ENCODE measurements at regions of chr2 and their contacts with region 1.

Region 1: GRCh38 chr2:16756831-16757644 is 91.4 kb upstream of the CYRIA start:
- DNase-seq: peak; percentile 11 to 72 (median 58)
- ATAC-seq: peak; percentile 66
- H3K4me3 ChIP-seq: no peak overlapping the region
- H3K4me3 Mint-ChIP-seq: no peak overlapping the region
- H3K27ac ChIP-seq: no peak overlapping the region
- H3K27ac Mint-ChIP-seq: no peak overlapping the region
- H3K4me1 ChIP-seq: no peaks in the 10 kb centered on the region
- H3K4me1 Mint-ChIP-seq: no peaks in the 10 kb centered on the region
- H3K27me3 ChIP-seq: no peaks in the 10 kb centered on the region
- H3K27me3 Mint-ChIP-seq: peaks cover 3% of the 10 kb centered on the region
- CTCF ChIP-seq: peak; percentile 59

Region 2: GRCh38 chr2:15636972-15637785 is 1119.9 kb before region 1 on chr2:
- CTCF ChIA-PET with region 1: interaction called, 3 read pairs
- POLR2A ChIA-PET with region 1: no interaction called
- intact Hi-C with region 1: loop called (anchors 2 to 5 kb)
- DNase-seq: peak; percentile 20 to 73 (median 58)
- ATAC-seq: peak; percentile 78
- H3K4me3 ChIP-seq: no peak overlapping the region
- H3K4me3 Mint-ChIP-seq: no peak overlapping the region
- H3K27ac ChIP-seq: no peak overlapping the region
- H3K27ac Mint-ChIP-seq: no peak overlapping the region
- H3K4me1 ChIP-seq: no peaks in the 10 kb centered on the region
- H3K4me1 Mint-ChIP-seq: no peaks in the 10 kb centered on the region
- H3K27me3 ChIP-seq: no peaks in the 10 kb centered on the region
- H3K27me3 Mint-ChIP-seq: no peaks in the 10 kb centered on the region
- CTCF ChIP-seq: peak; percentile 94

Region 3: DNA sequence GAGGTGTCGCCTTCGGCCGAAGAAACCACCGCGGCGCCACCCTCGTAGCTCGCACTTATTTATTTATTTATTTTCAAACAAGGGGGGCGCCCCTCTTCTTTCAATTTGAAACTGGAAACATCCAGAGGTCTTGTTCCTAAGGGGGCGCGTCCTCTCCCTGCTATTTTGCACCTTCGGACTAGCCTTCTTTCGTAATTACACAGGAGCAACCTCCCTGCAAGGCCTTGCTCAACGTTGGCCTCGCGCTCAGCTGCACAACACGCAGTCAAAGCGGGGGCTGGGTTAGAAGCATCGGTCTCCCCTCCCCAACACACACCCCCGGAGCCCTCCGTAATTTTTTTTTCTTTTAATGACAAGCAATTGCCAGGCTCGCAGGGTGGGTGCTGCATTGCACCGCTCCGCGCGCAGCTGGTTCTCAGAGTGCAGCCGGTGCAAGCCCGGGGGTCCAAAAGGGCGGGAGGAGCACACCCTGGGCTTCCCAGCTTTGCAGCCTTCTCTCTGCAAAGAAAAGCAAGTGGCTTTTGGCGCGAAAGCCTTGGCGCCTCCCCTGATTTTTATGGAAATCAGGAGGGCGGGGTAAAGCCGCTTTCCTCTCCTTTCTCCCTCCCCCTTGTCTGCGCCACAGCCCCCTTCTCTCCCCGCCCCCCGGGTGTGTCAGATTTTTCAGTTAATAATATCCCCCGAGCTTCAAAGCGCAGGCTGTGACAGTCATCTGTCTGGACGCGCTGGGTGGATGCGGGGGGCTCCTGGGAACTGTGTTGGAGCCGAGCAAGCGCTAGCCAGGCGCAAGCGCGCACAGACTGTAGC is 817.0 kb before region 1 on chr2 and contains the start of gene MYCN:
- CTCF ChIA-PET with region 1: no interaction called
- POLR2A ChIA-PET with region 1: no interaction called
- intact Hi-C with region 1: loop called in 1 of 2 experiments (anchors 2 kb)
- DNase-seq: peak in 6 of 9 experiments; percentile 30 to 63 (median 34)
- ATAC-seq: no peak
- H3K4me3 ChIP-seq: peak within 1 kb of the TSS; percentile 28 to 54
- H3K4me3 Mint-ChIP-seq: peak within 1 kb of the TSS; percentile 75
- H3K27ac ChIP-seq: no peak within 1 kb of the TSS
- H3K27ac Mint-ChIP-seq: no peak within 1 kb of the TSS
- H3K4me1 ChIP-seq: peaks cover 36% of the 10 kb centered on the region
- H3K4me1 Mint-ChIP-seq: peaks cover 31% of the 10 kb centered on the region
- H3K27me3 ChIP-seq: peaks cover 9 to 14% of the 10 kb centered on the region in 2 experiments
- H3K27me3 Mint-ChIP-seq: peaks cover 50% of the 10 kb centered on the region
- CTCF ChIP-seq: peak; percentile 41
- total RNA-seq, gene MYCN: not detected

Region 4: GRCh38 chr2:16553226-16553625 is 203.8 kb before region 1 on chr2:
- CTCF ChIA-PET with region 1: interaction called, 4 read pairs
- POLR2A ChIA-PET with region 1: no interaction called
- intact Hi-C with region 1: loop called in 1 of 2 experiments (anchors 1 kb)
- DNase-seq: peak in 4 of 9 experiments; percentile 5 to 51 (median 28)
- ATAC-seq: no peak
- H3K4me3 ChIP-seq: no peak overlapping the region
- H3K4me3 Mint-ChIP-seq: no peak overlapping the region
- H3K27ac ChIP-seq: no peak overlapping the region
- H3K27ac Mint-ChIP-seq: no peak overlapping the region
- H3K4me1 ChIP-seq: no peaks in the 10 kb centered on the region
- H3K4me1 Mint-ChIP-seq: no peaks in the 10 kb centered on the region
- H3K27me3 ChIP-seq: no peaks in the 10 kb centered on the region
- H3K27me3 Mint-ChIP-seq: no peaks in the 10 kb centered on the region
- CTCF ChIP-seq: peak; percentile 50

Region 5: DNA sequence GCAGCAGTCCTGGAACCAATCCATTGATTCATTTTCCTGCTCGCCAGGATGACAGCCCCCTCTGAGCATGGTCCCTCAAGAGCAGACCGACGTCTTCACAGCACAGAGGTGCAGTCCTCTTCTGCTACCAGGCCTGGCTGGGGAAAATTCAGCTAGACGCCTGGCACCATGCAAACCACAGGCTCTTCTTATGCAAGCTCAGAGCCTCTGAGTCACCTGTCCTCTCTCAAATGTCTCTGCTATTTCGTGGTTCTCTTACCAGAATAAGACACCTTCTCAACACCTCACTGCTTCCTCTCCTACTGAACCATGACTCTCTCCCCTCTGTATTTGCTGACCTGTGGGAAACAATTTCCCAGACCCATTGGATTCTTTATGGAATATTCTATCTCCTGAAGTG is 11.6 kb before region 1 on chr2:
- CTCF ChIA-PET with region 1: interaction called, 14 read pairs
- POLR2A ChIA-PET with region 1: no interaction called
- intact Hi-C with region 1: no loop called
- DNase-seq: no peak
- ATAC-seq: no peak
- H3K4me3 ChIP-seq: no peak overlapping the region
- H3K4me3 Mint-ChIP-seq: no peak overlapping the region
- H3K27ac ChIP-seq: no peak overlapping the region
- H3K27ac Mint-ChIP-seq: no peak overlapping the region
- H3K4me1 ChIP-seq: no peaks in the 10 kb centered on the region
- H3K4me1 Mint-ChIP-seq: no peaks in the 10 kb centered on the region
- H3K27me3 ChIP-seq: no peaks in the 10 kb centered on the region
- H3K27me3 Mint-ChIP-seq: peaks cover 3% of the 10 kb centered on the region
- CTCF ChIP-seq: no peak

Region 6: DNA sequence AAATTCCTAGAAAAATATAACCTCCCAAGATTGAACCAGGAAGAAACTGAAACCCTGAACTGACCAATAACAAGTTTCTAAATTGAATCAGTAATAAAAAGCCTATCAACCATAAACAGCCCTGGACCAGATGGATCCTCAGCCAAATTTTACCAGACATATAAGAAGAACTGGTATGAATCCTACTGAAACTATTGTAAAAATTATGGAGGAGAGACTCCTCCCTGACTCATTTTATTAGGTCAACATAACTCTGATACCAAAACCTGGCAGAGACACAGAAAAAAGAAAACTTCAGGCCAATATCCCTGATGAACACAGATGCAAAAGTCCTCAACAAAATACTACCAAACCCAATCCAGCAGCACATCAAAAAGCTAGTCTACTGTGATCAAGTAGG is 1821.0 kb after region 1 on chr2:
- CTCF ChIA-PET with region 1: no interaction called
- POLR2A ChIA-PET with region 1: no interaction called
- intact Hi-C with region 1: no loop called
- DNase-seq: no peak
- ATAC-seq: no peak
- H3K4me3 ChIP-seq: no peak overlapping the region
- H3K4me3 Mint-ChIP-seq: no peak overlapping the region
- H3K27ac ChIP-seq: no peak overlapping the region
- H3K27ac Mint-ChIP-seq: no peak overlapping the region
- H3K4me1 ChIP-seq: no peaks in the 10 kb centered on the region
- H3K4me1 Mint-ChIP-seq: no peaks in the 10 kb centered on the region
- H3K27me3 ChIP-seq: no peaks in the 10 kb centered on the region
- H3K27me3 Mint-ChIP-seq: no peaks in the 10 kb centered on the region
- CTCF ChIP-seq: no peak